Activated B cell treated with CpG ODN at 0.5 μM for 24 hours (primary cell): ENCODE measurements at regions of chr12 and their contacts with region 1.

Region 1: DNA sequence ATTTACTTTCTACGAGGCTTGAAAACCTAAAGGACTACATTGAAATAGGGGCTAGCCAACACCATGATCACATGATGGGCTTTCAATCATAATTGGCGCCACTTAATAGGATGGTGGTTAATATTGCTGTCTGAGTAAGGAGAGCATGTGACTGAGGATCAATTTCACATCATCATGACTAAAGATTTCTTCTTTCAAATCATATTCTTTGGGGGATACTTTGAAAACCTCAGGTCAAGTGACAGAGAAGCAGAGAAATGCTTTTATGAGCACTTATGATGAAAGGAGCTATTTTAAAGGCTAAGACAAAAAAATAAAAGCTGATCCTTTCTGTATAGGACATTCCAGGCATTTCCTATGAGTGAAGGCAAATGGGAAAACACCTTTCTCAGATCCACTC is 42.9 kb upstream of the KRAS start:
- DNase-seq: no peak
- ATAC-seq: no peak
- H3K4me3 Mint-ChIP-seq: no peak overlapping the region
- H3K27ac Mint-ChIP-seq: no peak overlapping the region
- H3K4me1 Mint-ChIP-seq: peaks cover 4% of the 10 kb centered on the region
- H3K27me3 Mint-ChIP-seq: no peaks in the 10 kb centered on the region
- CTCF ChIP-seq: no peak

Region 2: GRCh38 chr12:25328072-25328712 is 34.5 kb after region 1 on chr12:
- CTCF ChIA-PET with region 1: no interaction called
- POLR2A ChIA-PET with region 1: no interaction called
- intact Hi-C with region 1: loop called (anchors 5 kb)
- DNase-seq: no peak
- ATAC-seq: peak; percentile 47
- H3K4me3 Mint-ChIP-seq: no peak overlapping the region
- H3K27ac Mint-ChIP-seq: no peak overlapping the region
- H3K4me1 Mint-ChIP-seq: peaks cover 25% of the 10 kb centered on the region
- H3K27me3 Mint-ChIP-seq: no peaks in the 10 kb centered on the region
- CTCF ChIP-seq: no peak